ENCODE measurements at regions of chr19 and their contacts with region 1.

Region 1: DNA sequence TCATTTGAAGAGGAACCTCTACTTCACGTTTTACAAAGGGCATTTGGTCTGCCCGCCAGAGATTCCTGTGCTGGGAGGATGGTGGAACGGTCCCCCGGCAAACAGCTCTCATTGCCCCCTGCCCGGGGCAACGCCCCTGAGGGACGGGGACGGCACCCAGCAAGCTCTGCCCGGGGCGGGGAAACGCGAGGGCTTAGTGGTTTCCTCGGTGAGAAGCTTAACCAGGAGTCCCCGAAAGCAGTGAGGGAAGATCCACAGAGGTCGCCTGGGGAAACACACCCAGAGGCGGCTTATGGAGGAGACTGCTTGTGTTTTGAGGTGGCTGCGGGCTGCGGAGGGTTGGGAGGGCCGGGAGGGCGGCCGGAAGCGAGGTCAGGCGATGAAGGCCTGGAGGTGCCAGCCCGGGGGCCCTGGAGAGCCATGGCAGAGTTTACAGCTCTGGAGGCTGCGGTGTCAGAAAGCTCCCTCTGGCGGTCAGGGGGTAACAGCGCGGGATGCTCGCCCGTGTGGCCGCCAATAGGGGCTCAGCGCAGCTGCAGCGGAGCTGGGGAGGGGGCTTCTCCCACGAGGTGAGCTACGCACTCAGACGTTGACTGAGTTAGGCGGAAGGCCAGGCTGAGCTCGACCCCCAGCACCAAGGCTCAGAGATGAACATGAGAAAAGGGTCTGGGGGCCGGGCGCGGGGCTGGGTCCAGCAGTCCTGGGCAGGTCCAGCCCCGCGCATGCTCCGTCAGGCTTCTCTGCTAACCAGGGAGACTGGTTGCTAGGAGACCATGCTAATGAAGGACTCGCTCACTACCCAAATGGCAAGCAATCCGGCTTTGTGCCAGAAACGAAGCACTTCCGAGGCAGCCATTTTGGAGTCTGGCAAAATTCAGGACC is 652 bp upstream of the TPGS1 start:
- DNase-seq: peak; percentile 94 to 96
- H3K4me3 ChIP-seq: peak overlapping the region; percentile 97
- H3K27ac ChIP-seq: peak overlapping the region; percentile 86
- H3K4me1 ChIP-seq: 0 out of 2 replicates have a peak, but pooled peaks cover 6% of the 10 kb centered on the region
- H3K27me3 ChIP-seq: no peaks in the 10 kb centered on the region
- CTCF ChIP-seq: peak; percentile 91

Region 2: DNA sequence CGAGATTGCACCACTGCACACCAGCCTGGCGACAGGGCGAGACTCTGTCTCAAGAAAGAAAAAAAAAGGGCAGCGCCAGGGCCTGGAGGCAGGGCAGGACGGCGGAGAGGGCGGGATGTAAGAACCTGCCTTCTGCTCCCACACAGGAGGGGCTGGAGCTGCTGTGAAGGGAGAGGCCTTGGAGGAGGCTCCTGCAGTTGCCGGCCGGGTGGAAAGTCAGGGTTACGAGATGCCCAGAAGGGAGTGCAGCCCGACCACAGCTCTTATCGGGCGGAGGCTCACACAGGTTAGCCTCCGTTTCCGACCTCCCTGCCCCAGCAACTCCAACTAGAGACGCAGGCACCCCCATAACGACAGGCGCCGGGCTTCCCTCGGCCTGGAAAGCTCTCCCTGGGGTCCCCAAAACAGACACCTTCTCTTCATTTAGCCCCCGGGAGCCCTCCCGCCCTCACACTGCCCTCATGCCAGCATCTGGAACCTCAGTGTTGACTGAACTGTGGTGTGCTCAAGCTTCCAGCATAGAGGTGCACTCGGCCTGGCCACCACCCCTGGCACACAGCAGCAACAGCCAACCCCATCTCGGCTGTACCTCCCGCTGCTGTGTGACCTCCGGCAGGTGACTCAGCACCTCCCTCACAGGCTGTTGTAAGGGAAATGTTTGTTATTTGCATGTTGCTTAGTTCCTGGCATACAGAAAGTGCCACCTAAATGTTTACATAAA is 216.8 kb before region 1 on chr19:
- CTCF ChIA-PET with region 1: no interaction called
- POLR2A ChIA-PET with region 1: no interaction called
- intact Hi-C with region 1: loop called (anchors 2 kb)
- DNase-seq: peak; percentile 85 to 96
- H3K4me3 ChIP-seq: peak overlapping the region; percentile 69
- H3K27ac ChIP-seq: peak overlapping the region; percentile 88
- H3K4me1 ChIP-seq: peaks cover 13% of the 10 kb centered on the region
- H3K27me3 ChIP-seq: no peaks in the 10 kb centered on the region
- CTCF ChIP-seq: no peak

Region 3: DNA sequence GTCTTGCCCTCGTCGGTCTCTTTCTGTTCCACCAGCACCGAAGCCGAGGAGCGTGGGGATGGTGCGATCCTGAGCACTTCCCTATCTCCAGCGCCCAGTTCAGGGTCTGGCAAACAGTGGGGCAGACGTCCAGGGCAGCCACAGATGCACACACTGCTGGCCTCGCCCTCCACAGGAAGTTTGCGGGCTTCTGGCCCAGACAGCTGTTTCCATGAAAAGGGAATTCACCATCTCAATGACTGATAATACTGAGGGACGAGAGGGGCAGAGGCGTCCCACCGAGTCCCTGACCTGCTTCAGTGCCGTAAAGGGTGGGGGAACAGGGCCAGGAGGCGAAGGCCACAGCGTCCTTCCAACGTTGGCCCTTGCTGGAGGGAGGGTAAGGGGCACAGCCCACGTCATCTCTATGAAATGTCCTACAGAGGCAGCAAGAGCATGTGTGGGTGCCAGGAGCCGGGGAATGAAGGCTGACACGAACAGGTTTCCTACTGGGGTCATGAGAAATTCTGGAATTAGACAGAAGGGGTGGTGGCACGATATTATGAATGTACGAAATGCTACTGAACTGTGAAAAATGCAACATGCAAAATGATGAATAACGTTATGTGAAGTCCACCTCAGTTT is 65.3 kb before region 1 on chr19:
- CTCF ChIA-PET with region 1: no interaction called
- POLR2A ChIA-PET with region 1: no interaction called
- intact Hi-C with region 1: no loop called
- DNase-seq: no peak
- H3K4me3 ChIP-seq: no peak overlapping the region
- H3K27ac ChIP-seq: no peak overlapping the region
- H3K4me1 ChIP-seq: no peaks in the 10 kb centered on the region
- H3K27me3 ChIP-seq: peaks cover 59% of the 10 kb centered on the region
- CTCF ChIP-seq: no peak

Region 4: GRCh38 chr19:488505-489417 is 17.9 kb before region 1 on chr19:
- CTCF ChIA-PET with region 1: no interaction called
- POLR2A ChIA-PET with region 1: interaction called, 3 read pairs
- intact Hi-C with region 1: loop called (anchors 2 kb)
- DNase-seq: peak; percentile 75 to 94
- H3K4me3 ChIP-seq: peak overlapping the region; percentile 89
- H3K27ac ChIP-seq: peak overlapping the region; percentile 57
- H3K4me1 ChIP-seq: peaks cover 11% of the 10 kb centered on the region; the same call in 1 of the 2 replicates
- H3K27me3 ChIP-seq: no peaks in the 10 kb centered on the region
- CTCF ChIP-seq: no peak

Region 5: GRCh38 chr19:531009-531752 is 24.5 kb after region 1 on chr19:
- CTCF ChIA-PET with region 1: interaction called, 7 read pairs
- POLR2A ChIA-PET with region 1: interaction called, 7 read pairs
- intact Hi-C with region 1: loop called (anchors 1 kb)
- DNase-seq: peak; percentile 58 to 93
- H3K4me3 ChIP-seq: peak overlapping the region; percentile 86
- H3K27ac ChIP-seq: peak overlapping the region; percentile 38
- H3K4me1 ChIP-seq: peaks cover 48% of the 10 kb centered on the region
- H3K27me3 ChIP-seq: no peaks in the 10 kb centered on the region
- CTCF ChIP-seq: no peak

Measured in PC-9 (cell line).